Uterus (tissue), 4 donors: ENCODE measurements at regions of chr4 and their contacts with region 1.

Region 1: GRCh38 chr4:19888587-19888986 is 363.1 kb upstream of the SLIT2 start:
- DNase-seq: no peak
- H3K4me3 ChIP-seq: no peak overlapping the region
- H3K27ac ChIP-seq: no peak overlapping the region
- H3K4me1 ChIP-seq: no peaks in the 10 kb centered on the region
- H3K27me3 ChIP-seq: no peaks in the 10 kb centered on the region
- CTCF ChIP-seq: no peak
- POLR2A ChIP-seq: no peak

Region 2: DNA sequence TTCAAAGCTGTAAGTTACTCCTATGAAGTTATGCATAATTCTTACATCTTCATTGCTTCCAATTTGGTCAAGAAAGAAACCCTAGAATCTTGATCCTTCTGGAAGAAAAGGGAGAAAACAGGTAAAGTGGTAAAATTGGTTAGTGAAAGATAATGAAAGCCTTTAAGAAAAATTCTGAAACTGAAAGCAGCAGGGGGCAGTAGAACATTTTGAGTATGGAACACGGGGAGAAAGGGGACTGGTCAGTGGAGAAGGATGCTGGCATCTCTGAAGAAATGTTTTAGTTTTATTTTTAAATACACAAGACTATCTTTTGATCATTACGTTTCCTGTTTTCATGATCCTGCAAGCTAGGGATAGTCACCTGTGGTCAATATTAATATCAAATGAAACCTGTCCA is 417.4 kb after region 1 on chr4:
- intact Hi-C with region 1: loop called (anchors 10 kb)
- DNase-seq: no peak
- H3K4me3 ChIP-seq: no peak overlapping the region
- H3K27ac ChIP-seq: no peak overlapping the region
- H3K4me1 ChIP-seq: no peaks in the 10 kb centered on the region
- H3K27me3 ChIP-seq: no peaks in the 10 kb centered on the region
- CTCF ChIP-seq: no peak
- POLR2A ChIP-seq: no peak